ENCODE measurements at regions of chr4 and their contacts with region 1.

Region 1: DNA sequence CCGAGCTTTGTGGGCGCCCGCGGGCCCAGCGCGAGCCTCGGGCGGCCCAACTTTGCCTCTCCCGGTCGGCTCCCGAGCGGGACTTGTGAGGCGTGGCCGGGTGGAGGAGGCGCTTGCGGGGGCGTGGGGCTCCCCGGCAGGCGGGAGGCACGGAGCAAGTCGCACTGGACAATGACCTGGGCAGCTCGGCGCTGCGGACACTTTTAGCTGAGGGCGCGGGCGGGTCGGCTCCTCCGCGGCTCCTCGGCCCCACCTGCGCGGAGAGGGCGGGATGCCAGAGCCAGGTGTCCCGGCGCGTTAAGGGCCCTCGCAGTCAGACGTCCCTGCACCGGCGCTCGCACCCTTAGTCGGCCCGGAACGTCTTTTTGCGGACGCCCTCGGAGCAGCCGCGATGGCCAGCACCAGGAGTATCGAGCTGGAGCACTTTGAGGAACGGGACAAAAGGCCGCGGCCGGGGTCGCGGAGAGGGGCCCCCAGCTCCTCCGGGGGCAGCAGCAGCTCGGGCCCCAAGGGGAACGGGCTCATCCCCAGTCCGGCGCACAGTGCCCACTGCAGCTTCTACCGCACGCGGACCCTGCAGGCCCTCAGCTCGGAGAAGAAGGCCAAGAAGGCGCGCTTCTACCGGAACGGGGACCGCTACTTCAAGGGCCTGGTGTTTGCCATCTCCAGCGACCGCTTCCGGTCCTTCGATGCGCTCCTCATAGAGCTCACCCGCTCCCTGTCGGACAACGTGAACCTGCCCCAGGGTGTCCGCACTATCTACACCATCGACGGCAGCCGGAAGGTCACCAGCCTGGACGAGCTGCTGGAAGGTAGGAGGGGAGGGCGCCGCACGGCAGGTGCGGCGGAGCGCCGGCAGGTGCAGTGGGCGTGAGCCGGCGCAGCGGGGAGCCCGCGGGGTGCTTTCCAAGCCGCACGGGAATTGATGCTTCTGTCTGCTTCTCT is 664 bp downstream of the DCLK2 start:
- DNase-seq: peak; percentile 82
- H3K4me3 ChIP-seq: peak overlapping the region; percentile 83 to 95 (median 90)
- H3K27ac ChIP-seq: peak overlapping the region; percentile 93 to 97 (median 94)
- H3K4me1 ChIP-seq: peaks cover 0 to 50% (median 28%) of the 10 kb centered on the region in 4 donors
- H3K27me3 ChIP-seq: no peaks in the 10 kb centered on the region
- CTCF ChIP-seq: peak in 1 of 4 experiments; percentile 9
- EP300 ChIP-seq: no peak
- POLR2A ChIP-seq: no peak

Region 2: DNA sequence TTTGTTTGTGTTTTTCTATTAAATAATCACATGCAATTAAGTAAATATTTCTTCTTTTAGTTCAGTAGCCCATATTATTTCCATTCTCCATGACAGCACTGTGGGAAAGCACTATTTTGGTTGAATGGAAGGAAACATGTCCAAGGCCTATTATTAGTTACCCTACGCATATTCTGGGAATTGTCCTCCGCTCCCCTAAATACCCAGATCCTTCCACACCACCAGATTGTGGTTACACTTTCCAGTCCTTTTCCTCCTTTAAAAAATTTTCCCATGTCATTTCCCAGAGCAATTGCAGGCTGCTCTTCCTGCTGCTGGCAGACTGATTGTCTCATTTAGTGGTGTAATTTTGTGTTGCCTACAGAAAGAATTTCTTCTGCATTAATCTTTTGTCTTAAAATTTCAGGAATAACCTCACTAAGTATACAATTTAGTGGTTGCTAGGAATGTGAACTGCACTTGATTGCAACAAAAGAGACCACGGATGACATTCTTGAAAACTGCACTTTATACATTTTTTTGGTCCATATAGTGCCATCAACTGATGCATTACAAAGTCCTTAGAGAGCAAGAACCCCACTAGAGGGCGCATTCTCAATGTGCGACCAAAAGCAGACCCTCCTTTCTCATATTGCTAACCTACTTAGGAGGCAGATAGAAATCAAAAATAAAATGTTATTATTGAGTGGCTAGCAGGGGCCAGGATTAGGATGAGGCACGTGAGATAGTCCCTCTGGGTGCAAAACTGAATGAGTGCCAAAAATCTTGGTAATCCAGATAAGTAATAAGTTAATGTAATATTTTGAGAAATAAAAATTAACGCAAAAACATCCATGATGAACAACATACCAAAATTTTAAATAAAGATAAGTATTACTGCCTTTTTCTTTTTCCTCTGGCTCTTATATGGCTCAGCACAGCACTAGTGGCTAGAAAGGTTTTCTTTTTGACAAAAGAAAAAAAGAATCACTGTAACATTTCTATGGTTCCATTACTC is 164.5 kb before region 1 on chr4:
- intact Hi-C with region 1: no loop called
- DNase-seq: no peak
- H3K4me3 ChIP-seq: no peak overlapping the region
- H3K27ac ChIP-seq: no peak overlapping the region
- H3K4me1 ChIP-seq: no peaks in the 10 kb centered on the region
- H3K27me3 ChIP-seq: no peaks in the 10 kb centered on the region
- CTCF ChIP-seq: peak in 2 of 4 experiments; percentile 33 to 39
- EP300 ChIP-seq: no peak
- POLR2A ChIP-seq: no peak

Region 3: GRCh38 chr4:149999485-150000074 is 79.3 kb before region 1 on chr4:
- intact Hi-C with region 1: loop called (anchors 5 kb)
- DNase-seq: peak; percentile 71
- H3K4me3 ChIP-seq: no peak overlapping the region
- H3K27ac ChIP-seq: no peak overlapping the region
- H3K4me1 ChIP-seq: peaks cover 0 to 46% (median 35%) of the 10 kb centered on the region in 4 donors
- H3K27me3 ChIP-seq: no peaks in the 10 kb centered on the region
- CTCF ChIP-seq: peak; percentile 57 to 75 (median 65)
- EP300 ChIP-seq: no peak
- POLR2A ChIP-seq: no peak

Region 4: DNA sequence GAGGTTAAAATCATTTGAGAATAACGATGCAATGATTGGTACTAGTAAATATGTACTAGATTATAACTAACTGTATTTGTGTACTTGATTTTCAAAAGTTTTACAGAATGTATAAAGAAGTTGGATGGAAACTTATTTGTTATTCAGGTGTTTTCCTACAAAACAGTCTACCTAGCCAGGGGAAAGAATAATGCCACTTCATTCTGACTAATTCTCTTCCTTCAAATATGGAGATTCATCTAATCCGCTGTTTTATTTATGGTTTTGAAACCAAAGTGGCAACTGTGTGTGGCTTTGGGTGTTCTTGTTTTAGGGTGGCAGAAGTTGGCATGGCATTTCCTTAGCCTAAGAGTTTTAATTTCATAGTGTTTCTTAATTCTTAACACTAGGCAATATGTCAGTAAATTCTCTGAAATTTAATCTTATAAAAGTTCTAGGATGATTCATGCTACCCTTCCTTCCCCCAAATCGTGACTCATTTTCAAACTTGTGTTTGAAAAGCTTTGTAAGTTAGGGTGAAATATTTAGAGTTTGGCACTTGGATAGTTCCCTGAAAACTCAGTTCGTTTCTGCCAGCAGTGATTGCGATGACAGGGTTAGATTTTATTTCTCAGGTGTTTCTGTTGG is 62.0 kb after region 1 on chr4:
- intact Hi-C with region 1: loop called (anchors 10 kb)
- DNase-seq: no peak
- H3K4me3 ChIP-seq: no peak overlapping the region
- H3K27ac ChIP-seq: peak overlapping the region in 3 of 4 donors; percentile 54 to 60 (median 54)
- H3K4me1 ChIP-seq: peaks cover 0 to 38% (median 22%) of the 10 kb centered on the region in 4 donors
- H3K27me3 ChIP-seq: no peaks in the 10 kb centered on the region
- CTCF ChIP-seq: no peak
- EP300 ChIP-seq: no peak
- POLR2A ChIP-seq: no peak

Region 5: GRCh38 chr4:150181536-150181935 is 102.6 kb after region 1 on chr4:
- intact Hi-C with region 1: no loop called
- DNase-seq: no peak
- H3K4me3 ChIP-seq: no peak overlapping the region
- H3K27ac ChIP-seq: no peak overlapping the region
- H3K4me1 ChIP-seq: peaks cover 0 to 26% (median 19%) of the 10 kb centered on the region in 4 donors
- H3K27me3 ChIP-seq: no peaks in the 10 kb centered on the region
- CTCF ChIP-seq: no peak
- EP300 ChIP-seq: no peak
- POLR2A ChIP-seq: no peak

Region 6: GRCh38 chr4:150217192-150217591 is 138.3 kb after region 1 on chr4:
- intact Hi-C with region 1: loop called (anchors 5 kb)
- DNase-seq: no peak
- H3K4me3 ChIP-seq: no peak overlapping the region
- H3K27ac ChIP-seq: peak overlapping the region in 2 of 4 donors; percentile 22 to 37
- H3K4me1 ChIP-seq: peaks cover 0 to 28% (median 14%) of the 10 kb centered on the region in 4 donors
- H3K27me3 ChIP-seq: no peaks in the 10 kb centered on the region
- CTCF ChIP-seq: peak in 1 of 4 experiments; percentile 17
- EP300 ChIP-seq: no peak
- POLR2A ChIP-seq: no peak

Region 7: DNA sequence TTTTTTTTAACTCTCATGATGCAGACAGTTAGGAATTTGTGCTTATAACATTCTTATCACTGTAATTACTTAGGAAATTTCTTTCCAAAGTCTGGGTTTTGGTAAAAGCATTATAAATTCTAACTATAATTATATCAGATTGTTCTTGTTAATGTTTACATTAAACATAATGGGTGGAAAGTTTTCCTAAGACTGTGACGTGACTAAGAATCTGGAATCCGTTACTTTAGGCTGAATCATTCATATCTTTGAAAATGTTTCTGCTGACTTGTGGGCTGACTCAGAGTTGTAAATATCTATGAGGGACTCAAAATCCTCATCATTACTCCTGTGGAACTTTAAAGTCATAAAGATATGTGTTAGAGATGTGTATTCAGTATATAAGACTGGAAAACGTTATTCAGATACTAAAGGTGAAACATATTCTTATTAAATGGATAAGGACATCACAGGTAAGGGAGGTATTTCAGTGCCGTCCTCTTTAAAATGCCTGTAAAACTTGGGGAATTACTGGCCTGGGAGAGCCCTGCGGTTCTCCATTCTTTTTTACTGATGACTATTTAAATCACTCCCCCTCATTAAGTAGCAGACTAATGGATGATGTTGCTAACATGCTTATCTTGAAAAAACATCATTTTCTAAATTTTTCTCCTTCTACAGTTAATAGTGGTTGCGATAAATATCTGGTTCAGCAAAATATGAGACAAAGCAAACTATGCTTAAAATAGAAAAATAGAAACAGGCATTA is 158.4 kb after region 1 on chr4:
- intact Hi-C with region 1: loop called (anchors 5 kb)
- DNase-seq: no peak
- H3K4me3 ChIP-seq: no peak overlapping the region
- H3K27ac ChIP-seq: peak overlapping the region; percentile 62 to 83 (median 74)
- H3K4me1 ChIP-seq: peaks cover 0 to 29% (median 21%) of the 10 kb centered on the region in 4 donors
- H3K27me3 ChIP-seq: no peaks in the 10 kb centered on the region
- CTCF ChIP-seq: no peak
- EP300 ChIP-seq: peak in 1 of 4 donors; percentile 46
- POLR2A ChIP-seq: no peak

Measured in sigmoid colon (tissue), 7 donors.